ENCODE measurements at regions of chr20 and their contacts with region 1.

Region 1: DNA sequence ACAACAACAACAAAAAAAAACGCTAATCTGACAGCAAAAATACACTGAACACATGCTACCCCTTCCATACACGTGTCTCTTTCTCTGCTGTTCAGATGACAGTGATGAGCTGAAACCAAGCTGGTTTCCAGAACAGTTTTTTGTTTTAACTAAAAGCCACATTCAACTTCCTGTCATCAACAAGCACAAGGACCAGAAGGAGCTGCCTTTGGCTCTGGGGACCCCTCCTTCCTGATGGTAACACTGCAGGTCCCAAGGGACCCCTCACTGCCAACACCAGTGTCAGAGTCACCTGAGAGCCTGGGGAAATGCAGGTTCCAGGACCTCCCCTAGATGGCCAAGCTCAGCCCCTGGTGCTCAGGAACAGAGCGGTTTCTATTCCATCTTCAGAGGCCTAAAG is 6.0 kb downstream of the CST7 start:
- DNase-seq: peak; percentile 41 to 63
- ATAC-seq: peak; percentile 7 to 44 (median 26)
- H3K4me3 ChIP-seq: no peak overlapping the region
- H3K4me3 Mint-ChIP-seq: peak overlapping the region; percentile 80
- H3K27ac ChIP-seq: peak overlapping the region; percentile 98
- H3K27ac Mint-ChIP-seq: peak overlapping the region; percentile 98 to 100
- H3K4me1 ChIP-seq: peaks cover 95% of the 10 kb centered on the region
- H3K4me1 Mint-ChIP-seq: peaks cover 82 to 94% of the 10 kb centered on the region in 2 donors
- H3K27me3 ChIP-seq: no peaks in the 10 kb centered on the region
- H3K27me3 Mint-ChIP-seq: no peaks in the 10 kb centered on the region
- CTCF ChIP-seq: no peak

Region 2: GRCh38 chr20:23361598-23362384 is 1593.3 kb before region 1 on chr20 and contains the start of gene GZF1:
- intact Hi-C with region 1: loop called (anchors 10 kb)
- DNase-seq: peak; percentile 99
- ATAC-seq: peak; percentile 75 to 91 (median 77)
- H3K4me3 ChIP-seq: peak within 1 kb of the TSS; percentile 90
- H3K4me3 Mint-ChIP-seq: peak within 1 kb of the TSS; percentile 98
- H3K27ac ChIP-seq: peak within 1 kb of the TSS; percentile 99
- H3K27ac Mint-ChIP-seq: peak within 1 kb of the TSS; percentile 98
- H3K4me1 ChIP-seq: peaks cover 45% of the 10 kb centered on the region
- H3K4me1 Mint-ChIP-seq: peaks cover 54 to 64% of the 10 kb centered on the region in 2 donors
- H3K27me3 ChIP-seq: no peaks in the 10 kb centered on the region
- H3K27me3 Mint-ChIP-seq: no peaks in the 10 kb centered on the region
- CTCF ChIP-seq: no peak
- total RNA-seq, gene GZF1: 45.1 to 56.6 (median 45.9) TPM

Region 3: DNA sequence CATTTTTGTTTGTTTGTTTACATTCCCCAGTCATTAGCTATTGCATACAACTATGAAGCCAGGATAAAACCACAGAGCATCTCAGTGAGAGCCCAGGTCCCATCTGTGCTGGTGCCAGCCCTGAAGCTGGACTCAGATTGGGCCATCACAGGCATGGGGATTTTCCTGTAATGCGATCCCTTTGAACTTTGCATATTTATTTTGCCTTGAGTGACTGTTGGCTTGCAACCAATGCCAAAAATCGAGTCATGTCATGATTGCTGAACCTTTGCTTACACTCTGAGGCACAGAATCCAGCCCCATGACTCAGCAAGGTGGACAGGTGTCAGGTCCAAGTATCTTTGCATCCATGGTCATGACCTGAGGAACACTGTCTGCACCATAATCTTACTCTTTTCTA is 920.2 kb before region 1 on chr20:
- intact Hi-C with region 1: loop called (anchors 10 kb)
- DNase-seq: no peak
- ATAC-seq: no peak
- H3K4me3 ChIP-seq: no peak overlapping the region
- H3K4me3 Mint-ChIP-seq: peak overlapping the region; percentile 11
- H3K27ac ChIP-seq: no peak overlapping the region
- H3K27ac Mint-ChIP-seq: peak overlapping the region in 1 of 2 donors; percentile 38
- H3K4me1 ChIP-seq: peaks cover 51% of the 10 kb centered on the region
- H3K4me1 Mint-ChIP-seq: peaks cover 40 to 68% of the 10 kb centered on the region in 2 donors
- H3K27me3 ChIP-seq: no peaks in the 10 kb centered on the region
- H3K27me3 Mint-ChIP-seq: no peaks in the 10 kb centered on the region
- CTCF ChIP-seq: no peak

Region 4: GRCh38 chr20:24149881-24150307 is 805.2 kb before region 1 on chr20:
- intact Hi-C with region 1: loop called (anchors 10 kb)
- DNase-seq: no peak
- ATAC-seq: no peak
- H3K4me3 ChIP-seq: no peak overlapping the region
- H3K4me3 Mint-ChIP-seq: no peak overlapping the region
- H3K27ac ChIP-seq: no peak overlapping the region
- H3K27ac Mint-ChIP-seq: peak overlapping the region; percentile 87 to 98
- H3K4me1 ChIP-seq: peaks cover 39% of the 10 kb centered on the region
- H3K4me1 Mint-ChIP-seq: peaks cover 74 to 78% of the 10 kb centered on the region in 2 donors
- H3K27me3 ChIP-seq: no peaks in the 10 kb centered on the region
- H3K27me3 Mint-ChIP-seq: peaks cover 0 to 11% of the 10 kb centered on the region in 2 donors
- CTCF ChIP-seq: peak; percentile 23

Region 5: GRCh38 chr20:25223179-25223661 is 268.2 kb after region 1 on chr20:
- intact Hi-C with region 1: no loop called
- DNase-seq: no peak
- ATAC-seq: no peak
- H3K4me3 ChIP-seq: no peak overlapping the region
- H3K4me3 Mint-ChIP-seq: no peak overlapping the region
- H3K27ac ChIP-seq: no peak overlapping the region
- H3K27ac Mint-ChIP-seq: no peak overlapping the region
- H3K4me1 ChIP-seq: no peaks in the 10 kb centered on the region
- H3K4me1 Mint-ChIP-seq: peaks cover 0 to 4% of the 10 kb centered on the region in 2 donors
- H3K27me3 ChIP-seq: no peaks in the 10 kb centered on the region
- H3K27me3 Mint-ChIP-seq: no peaks in the 10 kb centered on the region
- CTCF ChIP-seq: no peak

Measured in natural killer cell (primary cell).